ENCODE measurements at regions of chr5 and their contacts with region 1.

Region 1: DNA sequence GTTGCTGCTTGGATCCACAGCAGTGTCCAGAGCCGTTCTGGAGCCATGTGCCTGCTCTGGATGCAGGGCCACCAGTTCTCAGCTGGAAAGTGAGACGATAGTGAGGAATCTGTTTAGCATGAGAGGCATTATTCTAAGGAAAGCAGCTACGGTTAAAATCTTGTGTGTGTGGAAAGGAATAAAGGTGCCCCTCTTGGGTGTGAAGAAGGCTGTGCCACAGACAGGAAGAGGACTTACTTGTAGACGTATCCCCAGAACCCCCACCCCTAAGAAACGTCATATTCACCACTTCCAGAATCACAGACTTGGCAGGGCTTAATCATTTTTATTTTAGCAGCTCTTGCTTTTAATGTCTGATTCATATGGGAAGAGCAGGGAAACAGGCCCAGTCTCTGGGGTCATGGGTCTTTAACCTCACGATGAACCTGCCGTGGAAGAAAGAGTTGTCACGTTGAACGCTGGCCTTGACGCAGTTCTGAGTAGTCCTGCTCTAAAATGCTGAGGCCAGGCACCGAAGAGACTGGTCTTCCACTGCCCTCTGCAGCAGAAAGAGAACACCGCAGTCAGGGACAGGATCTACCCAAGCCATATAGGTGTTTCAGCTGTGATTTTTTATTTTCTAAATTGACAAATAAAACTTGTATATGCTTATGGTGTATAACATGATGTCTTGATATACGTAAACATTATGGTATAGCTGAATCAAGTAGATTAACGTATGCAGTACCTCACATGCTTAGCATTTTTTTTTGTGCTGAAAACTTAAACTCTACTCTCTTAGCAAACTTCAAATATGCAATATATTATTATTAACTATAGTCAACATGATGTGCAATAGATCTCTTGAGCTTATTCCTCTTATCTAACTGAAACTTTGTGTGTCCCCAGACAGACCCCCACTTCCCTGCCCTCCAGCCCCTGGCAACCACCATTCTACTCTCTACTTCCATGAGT is 38.8 kb downstream of the CARTPT start:
- DNase-seq: peak; percentile 13 to 77
- H3K4me3 ChIP-seq: peak overlapping the region in 1 of 2 donors; percentile 54
- H3K27ac ChIP-seq: peak overlapping the region; percentile 20 to 34
- H3K4me1 ChIP-seq: peaks cover 0 to 3% of the 10 kb centered on the region in 2 donors
- H3K27me3 ChIP-seq: no peaks in the 10 kb centered on the region
- CTCF ChIP-seq: peak; percentile 40 to 81 (median 67)

Region 2: GRCh38 chr5:71475788-71476384 is 282.0 kb before region 1 on chr5:
- intact Hi-C with region 1: loop called (anchors 10 kb)
- DNase-seq: no peak
- H3K4me3 ChIP-seq: no peak overlapping the region
- H3K27ac ChIP-seq: no peak overlapping the region
- H3K4me1 ChIP-seq: no peaks in the 10 kb centered on the region
- H3K27me3 ChIP-seq: no peaks in the 10 kb centered on the region
- CTCF ChIP-seq: peak in 2 of 3 experiments; percentile 13 to 28

Region 3: GRCh38 chr5:71573592-71573991 is 184.3 kb before region 1 on chr5:
- intact Hi-C with region 1: loop called (anchors 5 kb)
- DNase-seq: no peak
- H3K4me3 ChIP-seq: no peak overlapping the region
- H3K27ac ChIP-seq: no peak overlapping the region
- H3K4me1 ChIP-seq: no peaks in the 10 kb centered on the region
- H3K27me3 ChIP-seq: no peaks in the 10 kb centered on the region
- CTCF ChIP-seq: peak in 1 of 3 experiments; percentile 23

Region 4: GRCh38 chr5:71658916-71659662 is 98.8 kb before region 1 on chr5:
- intact Hi-C with region 1: loop called (anchors 10 kb)
- DNase-seq: no peak
- H3K4me3 ChIP-seq: no peak overlapping the region
- H3K27ac ChIP-seq: no peak overlapping the region
- H3K4me1 ChIP-seq: no peaks in the 10 kb centered on the region
- H3K27me3 ChIP-seq: no peaks in the 10 kb centered on the region
- CTCF ChIP-seq: no peak